H1 (cell line): ENCODE measurements at regions of chr11 and their contacts with region 1.

Region 1: DNA sequence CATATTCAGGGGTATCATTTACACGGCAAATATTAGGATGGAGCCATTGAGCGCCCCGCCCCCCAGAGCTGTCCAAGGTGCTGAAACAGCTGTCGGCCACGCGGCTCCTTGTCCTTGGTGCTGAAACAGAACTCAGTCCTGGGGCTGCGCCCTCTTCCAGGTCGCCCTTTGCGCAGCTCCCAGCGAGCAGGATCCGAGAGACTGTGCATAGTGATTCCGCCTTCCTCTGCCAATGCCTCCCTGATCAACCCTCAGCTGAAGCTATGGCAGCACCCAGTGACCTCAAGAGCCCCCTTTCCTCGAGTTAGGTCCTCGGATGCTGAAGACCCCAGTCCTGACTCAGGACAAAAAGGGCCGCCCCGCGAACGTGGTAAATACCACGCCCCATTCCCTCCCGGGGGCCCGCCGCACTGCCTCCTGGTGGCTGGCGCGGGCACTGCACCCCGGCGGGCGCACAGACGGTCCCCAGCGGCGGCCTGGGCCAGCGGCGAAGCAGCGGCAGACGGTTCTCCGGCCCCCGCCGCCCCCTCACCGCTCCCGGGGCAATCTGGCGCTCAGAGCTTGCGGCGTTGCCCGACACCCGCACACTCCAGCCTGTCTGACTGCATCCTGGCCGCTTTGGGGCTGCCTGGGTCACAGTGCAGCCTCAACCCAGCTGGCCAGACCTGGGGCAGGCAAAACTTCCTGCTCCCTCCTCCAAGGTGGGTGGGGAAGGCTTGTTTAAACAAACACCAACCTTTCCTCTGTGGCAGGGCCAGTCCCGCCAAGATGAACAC is 13.4 kb downstream of the SYT7 start:
- DNase-seq: peak; percentile 58 to 98
- H3K4me3 ChIP-seq: peak overlapping the region; percentile 16 to 54 (median 39); a peak in 6 of 8 replicates
- H3K27ac ChIP-seq: no peak overlapping the region
- H3K4me1 ChIP-seq: peaks cover 0 to 14% (median 5%) of the 10 kb centered on the region in 4 experiments; a peak in 5 of 7 replicates
- H3K27me3 ChIP-seq: peaks cover 0 to 10% (median 4%) of the 10 kb centered on the region in 4 experiments; a peak in 3 of 7 replicates
- CTCF ChIP-seq: peak; percentile 95 to 98 (median 96)
- EP300 ChIP-seq: no peak
- POLR2A ChIP-seq: no peak
- RAD21 ChIP-seq: peak; percentile 40 to 63; a peak in 3 of 4 replicates

Region 2: GRCh38 chr11:61477727-61478148 is 89.7 kb before region 1 on chr11:
- CTCF ChIA-PET with region 1: interaction called, 37 read pairs
- POLR2A ChIA-PET with region 1: no interaction called
- DNase-seq: peak; percentile 47 to 94
- H3K4me3 ChIP-seq: no peak overlapping the region
- H3K27ac ChIP-seq: no peak overlapping the region
- H3K4me1 ChIP-seq: peaks cover 0 to 16% (median 8%) of the 10 kb centered on the region in 4 experiments; a peak in 5 of 7 replicates
- H3K27me3 ChIP-seq: no peaks in the 10 kb centered on the region
- CTCF ChIP-seq: peak; percentile 78 to 97 (median 89)
- EP300 ChIP-seq: no peak
- POLR2A ChIP-seq: no peak
- RAD21 ChIP-seq: peak; percentile 94 to 96

Region 3: DNA sequence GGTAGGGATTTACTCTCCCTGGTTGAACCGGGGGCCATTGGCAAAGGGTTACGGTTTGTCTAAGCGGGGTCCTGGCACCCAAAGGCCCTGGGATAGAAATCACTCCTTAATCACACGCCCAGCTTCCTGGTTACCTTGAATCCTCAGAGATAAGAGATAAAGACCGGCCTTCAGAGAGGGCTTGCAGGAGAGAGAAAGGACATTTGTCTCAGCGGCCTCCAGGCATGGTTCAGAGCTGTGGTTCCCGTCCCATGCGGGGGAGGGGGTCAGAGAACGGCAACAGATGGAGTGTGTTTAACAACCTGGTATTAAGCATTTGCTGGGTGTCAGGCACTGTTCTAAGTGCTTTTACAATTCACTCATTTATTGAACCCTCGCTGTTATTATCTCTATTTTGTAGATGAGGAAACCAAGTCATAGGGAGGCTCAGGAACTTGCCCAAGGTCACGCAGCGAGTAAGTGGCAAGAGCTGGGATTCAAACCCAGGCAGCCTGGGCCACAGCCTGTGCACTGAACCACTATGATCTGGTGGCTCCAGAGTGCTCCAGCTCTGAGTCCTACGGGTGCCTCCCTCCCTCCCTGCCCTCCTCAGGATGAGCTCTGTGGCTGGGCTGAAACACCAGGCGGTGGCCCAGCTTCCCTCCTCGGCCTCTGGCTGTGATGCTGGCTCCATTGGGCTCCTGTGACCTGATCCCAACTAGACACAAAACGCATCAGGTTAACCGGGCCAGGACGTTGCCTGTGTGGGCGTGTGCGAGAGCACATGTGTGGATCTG is 40.3 kb before region 1 on chr11:
- CTCF ChIA-PET with region 1: interaction called, 109 read pairs
- POLR2A ChIA-PET with region 1: interaction called, 3 read pairs
- DNase-seq: no peak
- H3K4me3 ChIP-seq: no peak overlapping the region
- H3K27ac ChIP-seq: no peak overlapping the region
- H3K4me1 ChIP-seq: peaks cover 0 to 11% (median 4%) of the 10 kb centered on the region in 4 experiments; a peak in 5 of 7 replicates
- H3K27me3 ChIP-seq: no peaks in the 10 kb centered on the region; a peak in 1 of 7 replicates
- CTCF ChIP-seq: no peak
- EP300 ChIP-seq: no peak
- POLR2A ChIP-seq: no peak
- RAD21 ChIP-seq: no peak

Region 4: DNA sequence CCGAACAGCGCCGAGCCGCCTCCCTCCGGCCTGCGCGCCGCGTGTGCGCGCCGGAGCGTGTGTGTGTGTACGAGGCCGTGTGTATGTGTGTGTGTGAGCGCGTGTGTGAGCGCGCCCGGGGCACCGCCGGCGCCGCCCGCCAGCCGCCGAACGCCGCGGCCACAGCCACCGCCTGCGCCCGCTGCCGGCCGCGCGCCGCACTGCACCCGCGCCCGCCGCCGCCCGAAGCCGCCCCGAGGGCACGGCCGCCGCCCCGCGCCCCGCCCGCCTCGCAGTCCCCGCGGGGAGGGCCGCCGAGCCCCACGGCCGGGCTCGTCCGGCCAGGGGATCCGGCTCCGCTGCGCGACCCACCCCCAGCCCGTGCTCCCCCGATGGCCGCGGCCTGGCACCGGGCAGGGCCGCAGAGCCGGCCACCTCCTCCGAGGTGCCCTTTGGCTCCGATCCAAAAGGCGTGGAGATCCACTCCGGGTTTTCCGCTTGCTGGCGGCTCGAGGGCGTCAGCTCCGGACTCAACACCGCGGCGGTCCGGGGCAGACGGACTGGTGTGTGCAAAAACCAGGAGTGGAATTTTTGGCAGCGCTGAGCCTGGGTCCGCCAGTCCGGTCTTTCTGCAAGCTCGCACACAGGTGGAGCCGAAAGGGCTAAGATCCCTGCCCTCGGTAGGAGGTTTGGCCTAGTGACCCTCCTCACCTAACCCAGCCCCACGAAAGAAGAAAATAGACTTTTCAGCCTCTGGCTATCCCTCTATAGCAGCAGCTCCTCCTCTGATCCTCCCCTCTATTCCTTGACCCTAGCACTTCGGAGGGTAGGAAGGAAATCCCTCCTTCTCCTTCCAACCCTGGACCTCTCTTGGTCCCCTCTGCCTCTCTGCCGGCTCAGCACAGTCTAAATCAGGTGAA is 13.8 kb after region 1 on chr11 and contains the start of gene SYT7:
- CTCF ChIA-PET with region 1: interaction called, 146 read pairs
- POLR2A ChIA-PET with region 1: interaction called, 5 read pairs
- DNase-seq: peak; percentile 89 to 100
- H3K4me3 ChIP-seq: peak within 1 kb of the TSS; percentile 46 to 85 (median 64)
- H3K27ac ChIP-seq: no peak within 1 kb of the TSS
- H3K4me1 ChIP-seq: peaks cover 4 to 41% (median 31%) of the 10 kb centered on the region in 4 experiments
- H3K27me3 ChIP-seq: peaks cover 2 to 32% (median 26%) of the 10 kb centered on the region in 4 experiments
- CTCF ChIP-seq: peak in 1 of 3 experiments; percentile 9; a peak in 1 of 4 replicates
- EP300 ChIP-seq: peak in 1 of 2 experiments; percentile 67; a peak in 1 of 3 replicates
- POLR2A ChIP-seq: no peak
- RAD21 ChIP-seq: peak; percentile 1 to 9; a peak in 1 of 4 replicates
- total RNA-seq, gene SYT7: 10.5 and 10.6 TPM in 2 replicates

Region 5: DNA sequence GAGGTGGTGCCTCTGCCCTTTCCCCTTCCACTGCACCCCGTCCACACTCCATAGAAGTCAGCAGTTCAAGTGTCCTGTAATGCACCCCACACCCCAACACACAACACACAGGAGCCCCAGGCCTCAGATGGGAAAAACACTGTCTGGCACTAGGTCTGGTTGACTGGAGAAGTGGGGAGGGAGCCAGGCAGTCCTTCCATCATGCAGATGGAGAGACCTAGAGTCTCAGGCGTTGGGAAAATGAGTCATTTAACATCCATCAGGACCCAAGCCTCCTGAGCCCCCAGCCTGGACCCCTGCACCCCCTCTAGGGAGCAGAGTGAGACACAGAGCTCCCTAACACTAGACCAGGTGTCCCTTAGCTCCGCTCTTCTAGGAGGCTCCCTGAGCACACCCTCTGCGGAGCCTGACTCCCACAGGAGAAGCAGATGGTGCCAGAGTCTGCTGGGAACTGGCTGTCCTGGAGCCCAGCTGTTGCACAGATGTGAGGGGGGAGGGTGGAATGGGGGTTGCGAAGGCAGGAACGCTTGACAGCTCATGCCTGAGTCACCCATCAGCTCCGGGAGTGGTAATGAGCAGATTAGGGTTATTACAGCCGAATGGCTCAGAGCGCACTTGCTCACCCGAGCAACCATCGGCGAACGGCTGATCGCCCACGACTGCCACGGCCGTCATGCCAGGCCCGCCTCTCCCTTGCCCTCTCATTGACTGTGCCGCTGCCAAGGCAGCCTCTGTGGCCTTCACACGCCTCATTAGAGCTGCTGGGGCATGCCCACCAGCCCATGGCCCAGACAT is 35.5 kb after region 1 on chr11:
- CTCF ChIA-PET with region 1: interaction called, 25 read pairs
- POLR2A ChIA-PET with region 1: no interaction called
- DNase-seq: no peak
- H3K4me3 ChIP-seq: no peak overlapping the region
- H3K27ac ChIP-seq: no peak overlapping the region
- H3K4me1 ChIP-seq: peaks cover 5 to 22% (median 18%) of the 10 kb centered on the region in 4 experiments
- H3K27me3 ChIP-seq: no peaks in the 10 kb centered on the region; a peak in 1 of 7 replicates
- CTCF ChIP-seq: no peak
- EP300 ChIP-seq: no peak
- POLR2A ChIP-seq: no peak
- RAD21 ChIP-seq: no peak

Region 6: GRCh38 chr11:61792310-61793085 is 225.0 kb after region 1 on chr11 and contains the starts of genes FEN1 and TMEM258:
- CTCF ChIA-PET with region 1: no interaction called
- POLR2A ChIA-PET with region 1: no interaction called
- DNase-seq: peak; percentile 80 to 95
- H3K4me3 ChIP-seq: peak within 1 kb of the TSS; percentile 86 to 99 (median 98)
- H3K27ac ChIP-seq: peak within 1 kb of the TSS; percentile 100
- H3K4me1 ChIP-seq: peaks cover 0 to 4% (median 0%) of the 10 kb centered on the region in 4 experiments; a peak in 1 of 7 replicates
- H3K27me3 ChIP-seq: no peaks in the 10 kb centered on the region
- CTCF ChIP-seq: peak in 1 of 3 experiments; percentile 4; a peak in 1 of 4 replicates
- EP300 ChIP-seq: no peak
- POLR2A ChIP-seq: peak; percentile 57 to 82
- RAD21 ChIP-seq: no peak
- total RNA-seq, gene FEN1: 84.5 and 86.1 TPM in 2 replicates
- total RNA-seq, gene TMEM258: 186 and 191 TPM in 2 replicates